Panc1 (cell line): ENCODE measurements at regions of chr6 and their contacts with region 1.

Region 1: GRCh38 chr6:16761471-16762267 is 409 bp upstream of the ATXN1 start:
- DNase-seq: no peak
- ATAC-seq: peak; percentile 72
- H3K4me3 ChIP-seq: peak overlapping the region; percentile 94 to 95
- H3K27ac ChIP-seq: peak overlapping the region; percentile 94
- H3K4me1 ChIP-seq: peaks cover 55% of the 10 kb centered on the region
- H3K27me3 ChIP-seq: no peaks in the 10 kb centered on the region
- CTCF ChIP-seq: peak; percentile 56

Region 2: DNA sequence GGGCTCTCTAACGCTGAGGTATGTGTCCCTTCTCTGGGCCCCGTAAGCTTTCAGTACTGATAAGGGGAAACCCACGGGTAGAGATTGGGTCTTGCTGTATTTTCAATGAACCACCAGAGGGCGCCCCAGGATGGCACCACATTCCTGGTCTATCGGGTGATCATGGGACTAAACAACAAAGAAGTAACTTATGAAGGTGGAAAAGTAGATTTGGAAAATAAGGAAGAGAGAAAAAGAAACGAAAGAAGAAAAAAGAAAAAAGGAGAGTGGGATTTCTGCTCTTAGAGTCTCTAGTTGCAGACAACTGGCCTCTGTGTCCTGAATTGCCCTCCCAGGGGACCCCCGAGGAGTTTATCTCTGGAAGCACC is 429.5 kb before region 1 on chr6:
- CTCF ChIA-PET with region 1: no interaction called
- POLR2A ChIA-PET with region 1: no interaction called
- in situ Hi-C with region 1: no loop called
- intact Hi-C with region 1: loop called (anchors 10 kb)
- DNase-seq: no peak
- ATAC-seq: peak; percentile 91
- H3K4me3 ChIP-seq: no peak overlapping the region
- H3K27ac ChIP-seq: peak overlapping the region; percentile 55; the same call in 1 of the 2 replicates
- H3K4me1 ChIP-seq: peaks cover 12% of the 10 kb centered on the region
- H3K27me3 ChIP-seq: no peaks in the 10 kb centered on the region
- CTCF ChIP-seq: peak; percentile 83

Region 3: DNA sequence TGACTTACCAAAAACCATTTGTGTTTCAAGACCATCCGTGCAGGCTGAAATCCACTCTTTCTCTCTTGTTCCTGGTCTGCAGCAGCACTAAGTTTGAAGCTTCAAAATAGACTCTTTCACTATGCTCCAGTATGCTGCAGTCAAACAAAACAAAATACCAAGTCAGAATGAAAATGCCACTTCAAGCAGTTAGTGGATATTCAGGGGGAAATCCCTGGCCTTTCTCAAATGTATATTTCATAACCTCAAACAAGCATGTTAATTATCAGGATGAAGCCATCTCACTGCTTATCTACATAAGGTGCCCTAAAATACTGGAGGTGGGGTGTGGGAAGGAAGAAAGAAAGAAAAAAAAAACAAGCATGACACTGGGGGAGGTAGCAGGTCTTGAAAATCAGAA is 103.9 kb before region 1 on chr6:
- CTCF ChIA-PET with region 1: no interaction called
- POLR2A ChIA-PET with region 1: interaction called, 12 read pairs
- in situ Hi-C with region 1: no loop called
- intact Hi-C with region 1: no loop called
- DNase-seq: no peak
- ATAC-seq: no peak
- H3K4me3 ChIP-seq: no peak overlapping the region
- H3K27ac ChIP-seq: no peak overlapping the region
- H3K4me1 ChIP-seq: peaks cover 10% of the 10 kb centered on the region; the same call in 1 of the 2 replicates
- H3K27me3 ChIP-seq: no peaks in the 10 kb centered on the region
- CTCF ChIP-seq: no peak

Region 4: GRCh38 chr6:16723826-16724225 is 37.8 kb before region 1 on chr6:
- CTCF ChIA-PET with region 1: interaction called, 5 read pairs
- POLR2A ChIA-PET with region 1: interaction called, 6 read pairs
- in situ Hi-C with region 1: no loop called
- intact Hi-C with region 1: loop called (anchors 5 kb)
- DNase-seq: peak; percentile 78
- ATAC-seq: peak; percentile 41; the same call in 1 of the 2 replicates
- H3K4me3 ChIP-seq: peak overlapping the region in 1 of 2 experiments; percentile 6; a peak in 1 of 4 replicates
- H3K27ac ChIP-seq: peak overlapping the region; percentile 99
- H3K4me1 ChIP-seq: peaks cover 94% of the 10 kb centered on the region
- H3K27me3 ChIP-seq: no peaks in the 10 kb centered on the region
- CTCF ChIP-seq: no peak

Region 5: DNA sequence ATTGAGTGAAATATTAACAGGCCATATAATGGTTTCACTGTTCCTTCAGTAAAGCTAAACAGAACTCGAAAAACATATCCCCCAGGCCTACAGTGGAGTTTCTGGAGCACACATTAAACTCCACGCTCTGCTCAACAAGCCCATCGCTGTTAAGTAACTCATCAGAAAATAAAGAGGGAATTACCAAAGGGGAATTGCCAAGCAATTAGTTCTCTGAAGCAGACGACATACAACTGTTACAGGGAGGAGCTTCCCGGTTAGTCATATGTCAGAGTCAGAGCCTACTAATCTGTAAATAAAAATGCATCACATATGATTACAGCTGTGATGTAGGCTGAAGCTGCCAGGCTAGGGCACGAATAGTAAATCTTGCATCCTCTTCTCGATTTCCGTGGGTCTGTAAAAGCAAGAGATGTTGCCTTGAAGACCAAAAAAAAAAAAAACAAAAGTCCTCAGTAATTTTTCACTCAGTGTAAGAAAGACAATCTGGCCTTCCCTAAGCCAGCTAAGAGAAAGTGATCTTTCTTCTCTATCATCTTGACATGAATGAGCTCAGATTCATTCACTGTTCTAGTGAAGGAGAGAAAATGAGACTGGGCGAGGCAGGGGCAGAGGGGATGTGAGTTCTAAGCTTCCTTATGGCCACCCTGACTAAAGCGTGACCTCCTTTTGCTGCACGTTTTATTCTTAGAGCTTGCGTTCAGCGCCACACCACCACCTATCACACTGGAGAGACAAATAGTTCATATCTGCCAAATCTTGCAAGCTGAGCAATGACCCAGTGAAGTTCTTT is 14.2 kb before region 1 on chr6:
- CTCF ChIA-PET with region 1: interaction called, 5 read pairs
- POLR2A ChIA-PET with region 1: interaction called, 11 read pairs
- in situ Hi-C with region 1: no loop called
- intact Hi-C with region 1: no loop called
- DNase-seq: no peak
- ATAC-seq: peak; percentile 82
- H3K4me3 ChIP-seq: no peak overlapping the region
- H3K27ac ChIP-seq: peak overlapping the region; percentile 49
- H3K4me1 ChIP-seq: peaks cover 71% of the 10 kb centered on the region
- H3K27me3 ChIP-seq: no peaks in the 10 kb centered on the region
- CTCF ChIP-seq: no peak

Region 6: DNA sequence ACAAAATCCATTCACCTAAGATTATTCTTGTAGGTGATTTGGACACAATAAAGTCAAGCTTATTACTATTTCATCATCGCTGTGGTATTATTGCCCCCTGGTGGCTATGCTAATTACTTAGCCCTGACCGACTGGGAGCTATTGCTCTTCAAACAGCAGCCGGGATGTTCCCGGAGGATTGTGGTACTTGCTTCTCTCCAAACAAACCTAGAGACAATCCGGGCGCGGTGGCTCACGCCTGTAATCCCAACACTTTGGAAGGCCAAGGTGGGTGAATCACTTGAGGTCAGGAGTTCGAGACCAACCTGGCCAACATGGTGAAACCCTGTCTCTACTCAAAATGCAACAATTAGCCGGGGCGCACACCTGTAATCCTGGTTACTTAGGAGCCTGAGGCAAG is 324.8 kb after region 1 on chr6:
- CTCF ChIA-PET with region 1: interaction called, 11 read pairs
- POLR2A ChIA-PET with region 1: no interaction called
- in situ Hi-C with region 1: no loop called
- intact Hi-C with region 1: loop called (anchors 5 kb)
- DNase-seq: peak; percentile 57
- ATAC-seq: peak; percentile 94
- H3K4me3 ChIP-seq: no peak overlapping the region
- H3K27ac ChIP-seq: no peak overlapping the region
- H3K4me1 ChIP-seq: no peaks in the 10 kb centered on the region
- H3K27me3 ChIP-seq: peaks cover 6% of the 10 kb centered on the region; the same call in 1 of the 2 replicates
- CTCF ChIP-seq: peak; percentile 83

Region 7: GRCh38 chr6:17200395-17200794 is 438.7 kb after region 1 on chr6:
- CTCF ChIA-PET with region 1: no interaction called
- POLR2A ChIA-PET with region 1: no interaction called
- in situ Hi-C with region 1: no loop called
- intact Hi-C with region 1: no loop called
- DNase-seq: no peak
- ATAC-seq: no peak
- H3K4me3 ChIP-seq: no peak overlapping the region
- H3K27ac ChIP-seq: no peak overlapping the region
- H3K4me1 ChIP-seq: no peaks in the 10 kb centered on the region
- H3K27me3 ChIP-seq: no peaks in the 10 kb centered on the region
- CTCF ChIP-seq: peak; percentile 49

Region 8: DNA sequence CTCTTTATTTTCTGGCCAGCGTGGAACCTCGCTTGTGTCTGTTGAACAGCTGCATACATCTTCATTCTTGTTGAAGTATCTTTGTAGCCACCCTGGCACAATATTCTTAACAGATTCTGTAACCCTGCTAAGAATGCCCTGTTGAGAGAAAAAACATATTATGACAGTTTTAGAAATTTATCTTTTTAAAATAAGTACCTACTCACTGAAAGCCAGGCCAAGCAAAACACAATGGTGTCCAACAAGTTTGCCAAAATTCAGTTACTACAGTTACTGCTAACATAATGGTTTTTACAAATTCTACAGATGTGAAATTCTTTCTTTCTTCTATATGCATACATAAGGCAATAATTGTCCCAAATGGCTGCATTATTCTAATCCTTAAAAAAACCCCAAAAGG is 926.8 kb after region 1 on chr6:
- CTCF ChIA-PET with region 1: no interaction called
- POLR2A ChIA-PET with region 1: no interaction called
- in situ Hi-C with region 1: no loop called
- intact Hi-C with region 1: no loop called
- DNase-seq: no peak
- ATAC-seq: no peak
- H3K4me3 ChIP-seq: no peak overlapping the region
- H3K27ac ChIP-seq: no peak overlapping the region
- H3K4me1 ChIP-seq: no peaks in the 10 kb centered on the region
- H3K27me3 ChIP-seq: no peaks in the 10 kb centered on the region
- CTCF ChIP-seq: no peak